Activated CD4-positive, alpha-beta T cell treated with anti-CD3 and anti-CD28 coated beads for 36 hours (primary cell): ENCODE measurements at regions of chr18 and their contacts with region 1.

Region 1: DNA sequence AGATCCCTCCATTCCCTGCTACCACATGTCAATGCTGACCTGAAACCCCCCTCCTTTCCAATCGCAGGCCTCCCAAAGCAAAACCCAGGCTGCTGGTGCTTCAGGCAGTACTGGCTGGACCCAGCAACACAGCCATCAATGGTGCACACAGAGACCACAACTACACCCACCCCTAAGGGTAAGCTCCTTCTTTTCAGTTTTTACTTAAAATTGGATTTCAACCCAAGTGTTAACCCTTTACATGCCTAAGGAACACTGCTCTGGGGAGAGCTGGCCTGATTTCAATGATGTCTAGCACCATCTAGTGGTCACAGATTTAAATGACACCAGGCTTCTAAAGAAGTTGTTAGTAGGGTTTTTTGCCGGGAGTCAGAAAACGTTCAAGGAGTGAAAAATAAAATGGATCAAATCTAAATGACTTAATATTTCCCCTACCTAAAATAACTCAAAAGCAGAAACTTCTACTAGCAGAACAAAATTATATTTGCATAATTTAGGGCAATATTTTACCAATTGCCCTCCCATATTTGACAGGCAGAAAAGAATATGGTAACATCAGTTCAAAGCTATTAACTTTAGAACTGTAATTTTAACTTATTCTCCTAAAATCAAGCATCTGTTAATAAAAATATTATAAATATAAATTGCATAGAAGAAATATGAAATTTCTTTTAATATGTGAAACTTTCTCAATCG is 24.6 kb downstream of the FECH start:
- DNase-seq: peak; percentile 25
- ATAC-seq: no peak
- H3K4me3 Mint-ChIP-seq: no peak overlapping the region
- H3K27ac Mint-ChIP-seq: no peak overlapping the region
- H3K4me1 Mint-ChIP-seq: peaks cover 2% of the 10 kb centered on the region
- H3K27me3 Mint-ChIP-seq: no peaks in the 10 kb centered on the region

Region 2: GRCh38 chr18:56702946-56703345 is 858.9 kb before region 1 on chr18:
- CTCF ChIA-PET with region 1: interaction called, 3 read pairs
- POLR2A ChIA-PET with region 1: no interaction called
- intact Hi-C with region 1: loop called (anchors 5 kb)
- DNase-seq: peak; percentile 23
- ATAC-seq: peak; percentile 36
- H3K4me3 Mint-ChIP-seq: no peak overlapping the region
- H3K27ac Mint-ChIP-seq: no peak overlapping the region
- H3K4me1 Mint-ChIP-seq: no peaks in the 10 kb centered on the region
- H3K27me3 Mint-ChIP-seq: no peaks in the 10 kb centered on the region

Region 3: GRCh38 chr18:56748698-56749268 is 813.1 kb before region 1 on chr18:
- CTCF ChIA-PET with region 1: interaction called, 7 read pairs
- POLR2A ChIA-PET with region 1: no interaction called
- intact Hi-C with region 1: loop called (anchors 1 to 2 kb)
- DNase-seq: no peak
- ATAC-seq: no peak
- H3K4me3 Mint-ChIP-seq: no peak overlapping the region
- H3K27ac Mint-ChIP-seq: no peak overlapping the region
- H3K4me1 Mint-ChIP-seq: peaks cover 24% of the 10 kb centered on the region
- H3K27me3 Mint-ChIP-seq: no peaks in the 10 kb centered on the region

Region 4: GRCh38 chr18:56869189-56869777 is 692.6 kb before region 1 on chr18:
- CTCF ChIA-PET with region 1: no interaction called
- POLR2A ChIA-PET with region 1: no interaction called
- intact Hi-C with region 1: loop called in 1 of 2 experiments (anchors 5 kb)
- DNase-seq: peak; percentile 11
- ATAC-seq: no peak
- H3K4me3 Mint-ChIP-seq: no peak overlapping the region
- H3K27ac Mint-ChIP-seq: no peak overlapping the region
- H3K4me1 Mint-ChIP-seq: peaks cover 15% of the 10 kb centered on the region
- H3K27me3 Mint-ChIP-seq: no peaks in the 10 kb centered on the region

Region 5: GRCh38 chr18:58128381-58129374 is 566.8 kb after region 1 on chr18:
- CTCF ChIA-PET with region 1: no interaction called
- POLR2A ChIA-PET with region 1: no interaction called
- intact Hi-C with region 1: loop called in 1 of 2 experiments (anchors 5 kb)
- DNase-seq: no peak
- ATAC-seq: no peak
- H3K4me3 Mint-ChIP-seq: no peak overlapping the region
- H3K27ac Mint-ChIP-seq: no peak overlapping the region
- H3K4me1 Mint-ChIP-seq: no peaks in the 10 kb centered on the region
- H3K27me3 Mint-ChIP-seq: no peaks in the 10 kb centered on the region